ENCODE measurements at regions of chr11 and their contacts with region 1.

Region 1: GRCh38 chr11:113305440-113306336 is 8.7 kb upstream of the TTC12 start:
- DNase-seq: peak; percentile 67
- CTCF ChIP-seq: peak; percentile 94

Region 2: GRCh38 chr11:113532697-113533424 is 227.2 kb after region 1 on chr11:
- in situ Hi-C with region 1: loop called (anchors 10 kb)
- DNase-seq: peak; percentile 74
- CTCF ChIP-seq: peak; percentile 65

Region 3: DNA sequence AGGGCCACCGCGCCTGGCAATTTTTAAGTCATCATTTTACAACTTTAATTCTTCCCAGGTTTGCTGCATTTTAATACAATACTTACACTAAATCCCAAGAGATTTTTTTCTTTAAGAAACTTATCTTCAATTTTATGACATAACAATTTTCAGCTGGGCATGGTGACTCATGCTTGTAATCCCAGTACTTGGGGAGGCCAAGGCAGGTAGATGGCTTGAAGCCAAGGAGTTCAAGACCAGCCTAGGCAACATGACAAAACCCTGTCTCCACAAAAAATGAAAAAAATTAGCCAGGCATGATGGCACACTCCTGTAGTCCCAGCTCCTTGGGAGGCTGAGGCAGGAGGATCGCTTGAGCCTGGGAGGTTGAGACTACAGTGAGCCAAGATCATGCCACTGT is 512.7 kb after region 1 on chr11:
- in situ Hi-C with region 1: no loop called
- DNase-seq: no peak
- CTCF ChIP-seq: no peak